ENCODE measurements at regions of chr1 and their contacts with region 1.

Region 1: GRCh38 chr1:53278201-53278725 is 39.9 kb upstream of the MAGOH start:
- DNase-seq: peak; percentile 12
- H3K4me3 ChIP-seq: no peak overlapping the region
- H3K27ac ChIP-seq: no peak overlapping the region
- H3K4me1 ChIP-seq: peaks cover 13% of the 10 kb centered on the region
- H3K27me3 ChIP-seq: no peaks in the 10 kb centered on the region
- CTCF ChIP-seq: peak; percentile 60 to 77

Region 2: GRCh38 chr1:53326088-53326597 is 47.9 kb after region 1 on chr1:
- CTCF ChIA-PET with region 1: no interaction called
- dilution Hi-C with region 1: no loop called
- in situ Hi-C with region 1: no loop called
- intact Hi-C with region 1: loop called (anchors 1 kb)
- DNase-seq: peak; percentile 97
- H3K4me3 ChIP-seq: peak overlapping the region; percentile 52 to 85 (median 75)
- H3K27ac ChIP-seq: peak overlapping the region; percentile 78
- H3K4me1 ChIP-seq: peaks cover 20% of the 10 kb centered on the region
- H3K27me3 ChIP-seq: no peaks in the 10 kb centered on the region
- CTCF ChIP-seq: no peak

Region 3: GRCh38 chr1:53393325-53393792 is 115.1 kb after region 1 on chr1:
- CTCF ChIA-PET with region 1: no interaction called
- dilution Hi-C with region 1: no loop called
- in situ Hi-C with region 1: loop called (anchors 5 kb)
- intact Hi-C with region 1: loop called (anchors 1 kb)
- DNase-seq: peak; percentile 42
- H3K4me3 ChIP-seq: no peak overlapping the region
- H3K27ac ChIP-seq: no peak overlapping the region
- H3K4me1 ChIP-seq: peaks cover 6% of the 10 kb centered on the region
- H3K27me3 ChIP-seq: no peaks in the 10 kb centered on the region
- CTCF ChIP-seq: peak; percentile 76 to 85

Region 4: GRCh38 chr1:53470155-53470554 is 191.9 kb after region 1 on chr1:
- CTCF ChIA-PET with region 1: no interaction called
- dilution Hi-C with region 1: no loop called
- in situ Hi-C with region 1: no loop called
- intact Hi-C with region 1: loop called (anchors 2 kb)
- DNase-seq: peak; percentile 17
- H3K4me3 ChIP-seq: no peak overlapping the region
- H3K27ac ChIP-seq: no peak overlapping the region
- H3K4me1 ChIP-seq: no peaks in the 10 kb centered on the region
- H3K27me3 ChIP-seq: no peaks in the 10 kb centered on the region
- CTCF ChIP-seq: peak; percentile 41 to 50

Region 5: GRCh38 chr1:53681977-53682685 is 403.9 kb after region 1 on chr1:
- CTCF ChIA-PET with region 1: no interaction called
- dilution Hi-C with region 1: no loop called
- in situ Hi-C with region 1: no loop called
- intact Hi-C with region 1: loop called (anchors 5 kb)
- DNase-seq: peak; percentile 25
- H3K4me3 ChIP-seq: no peak overlapping the region
- H3K27ac ChIP-seq: no peak overlapping the region
- H3K4me1 ChIP-seq: no peaks in the 10 kb centered on the region
- H3K27me3 ChIP-seq: no peaks in the 10 kb centered on the region
- CTCF ChIP-seq: peak; percentile 62 to 83

Region 6: DNA sequence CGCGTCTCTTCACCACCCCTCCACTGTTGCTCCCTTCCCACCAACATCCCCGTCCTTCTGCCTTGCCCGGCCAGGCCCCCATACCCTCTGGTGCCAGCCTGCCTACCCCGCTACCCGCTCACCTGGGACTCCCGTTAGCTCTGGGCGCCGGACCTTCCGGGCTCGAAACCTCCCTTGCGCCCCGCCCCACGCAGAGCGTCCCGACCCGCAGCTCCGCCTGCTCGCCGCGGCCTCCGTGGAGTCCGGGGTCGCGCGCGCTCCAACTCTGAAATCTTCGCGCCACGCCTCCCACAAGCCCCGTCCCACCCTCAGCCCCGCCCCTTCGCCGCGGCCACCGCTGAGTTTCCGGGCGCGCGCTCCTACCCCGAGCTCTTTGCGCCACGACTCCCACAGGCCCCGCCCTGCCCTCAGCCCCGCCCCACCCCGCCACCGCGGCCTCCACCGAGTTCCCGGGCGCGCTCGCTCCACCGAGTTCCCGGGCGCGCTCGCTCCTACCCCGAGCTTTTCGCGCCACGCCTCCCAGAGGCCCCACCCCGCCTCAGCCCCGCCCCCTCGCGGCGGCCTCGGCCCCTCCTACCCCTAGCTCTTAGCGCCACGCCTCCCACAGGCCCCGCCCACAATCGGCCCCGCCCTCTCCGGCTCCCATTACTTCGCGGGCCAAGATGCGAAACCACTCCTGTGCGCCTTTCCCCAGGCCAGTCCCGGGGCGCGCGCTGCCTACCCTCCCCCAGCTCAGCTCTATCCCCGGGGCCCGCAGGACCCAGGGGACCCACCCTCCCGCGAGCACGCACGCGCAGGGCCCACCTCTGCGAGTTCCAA is 667.4 kb after region 1 on chr1 and contains the start of gene IFT25:
- CTCF ChIA-PET with region 1: interaction called, 10 read pairs
- dilution Hi-C with region 1: no loop called
- in situ Hi-C with region 1: no loop called
- intact Hi-C with region 1: no loop called
- DNase-seq: peak; percentile 95
- H3K4me3 ChIP-seq: peak within 1 kb of the TSS; percentile 90 to 99 (median 96)
- H3K27ac ChIP-seq: peak within 1 kb of the TSS; percentile 84
- H3K4me1 ChIP-seq: peaks cover 24% of the 10 kb centered on the region
- H3K27me3 ChIP-seq: no peaks in the 10 kb centered on the region
- CTCF ChIP-seq: no peak
- total RNA-seq, gene IFT25: 14.3 to 33.7 TPM

Measured in mammary epithelial cell (primary cell).